Right ventricle myocardium inferior (tissue), 1 donor: ENCODE measurements at regions of chr4 and their contacts with region 1.

Region 1: GRCh38 chr4:41814565-41814964 is 66.0 kb upstream of the PHOX2B start:
- DNase-seq: no peak
- ATAC-seq: no peak

Region 2: GRCh38 chr4:41692717-41693345 is 121.7 kb before region 1 on chr4:
- intact Hi-C with region 1: loop called (anchors 5 kb)
- DNase-seq: no peak
- ATAC-seq: peak; percentile 57